ENCODE measurements at regions of chr14 and their contacts with region 1.

Region 1: DNA sequence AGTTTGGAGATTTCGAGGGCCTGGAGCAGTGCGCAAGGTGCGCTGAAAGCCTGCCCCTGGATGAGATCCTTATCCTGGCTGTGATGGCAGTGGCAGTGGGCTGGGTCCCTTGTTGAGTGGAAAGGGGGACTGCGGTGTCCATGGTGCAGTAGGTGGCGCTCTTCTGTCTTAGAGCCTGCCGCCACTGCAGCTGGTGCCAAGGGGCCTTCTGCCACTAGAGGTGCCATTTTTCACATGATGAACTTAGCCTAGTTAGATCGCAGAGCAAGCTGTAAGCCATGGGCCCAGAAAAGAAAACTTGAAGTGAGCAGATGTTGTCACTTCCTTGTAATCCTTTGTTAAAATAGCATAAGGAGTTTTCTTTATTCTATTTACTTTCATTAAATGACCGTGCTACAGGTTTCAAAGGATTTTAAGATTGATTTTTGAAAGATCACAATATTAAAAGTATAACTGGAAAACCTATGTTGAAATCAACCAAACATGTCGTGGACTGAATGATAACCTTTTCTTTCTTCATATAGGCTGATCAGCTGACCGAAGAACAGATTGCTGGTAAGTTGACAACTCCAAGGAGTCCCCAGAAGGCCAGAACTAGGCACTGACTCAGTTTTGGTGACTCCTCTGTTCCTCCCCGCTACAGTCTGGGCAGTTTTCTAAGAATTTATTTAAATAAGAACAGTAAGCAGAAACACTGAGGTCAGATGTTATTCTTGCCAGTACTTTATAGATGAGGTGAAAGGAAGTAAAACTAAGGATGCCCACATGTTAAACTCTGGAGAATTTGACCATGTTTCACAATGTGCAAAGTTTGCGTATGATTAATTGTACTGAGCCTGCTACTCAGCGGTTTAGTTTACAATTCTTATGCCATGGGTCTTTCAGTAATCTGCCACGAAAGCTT is 3.0 kb downstream of the CALM1 start:
- DNase-seq: peak; percentile 92
- ATAC-seq: peak; percentile 39
- H3K4me3 ChIP-seq: peak overlapping the region in 1 of 5 experiments; percentile 85
- H3K4me3 Mint-ChIP-seq: peak overlapping the region; percentile 96
- H3K27ac ChIP-seq: peak overlapping the region; percentile 93 to 95
- H3K27ac Mint-ChIP-seq: peak overlapping the region; percentile 98
- H3K4me1 ChIP-seq: peaks cover 39 to 45% of the 10 kb centered on the region in 2 donors
- H3K4me1 Mint-ChIP-seq: peaks cover 46% of the 10 kb centered on the region
- H3K27me3 ChIP-seq: no peaks in the 10 kb centered on the region
- H3K27me3 Mint-ChIP-seq: no peaks in the 10 kb centered on the region
- CTCF ChIP-seq: peak; percentile 100

Region 2: DNA sequence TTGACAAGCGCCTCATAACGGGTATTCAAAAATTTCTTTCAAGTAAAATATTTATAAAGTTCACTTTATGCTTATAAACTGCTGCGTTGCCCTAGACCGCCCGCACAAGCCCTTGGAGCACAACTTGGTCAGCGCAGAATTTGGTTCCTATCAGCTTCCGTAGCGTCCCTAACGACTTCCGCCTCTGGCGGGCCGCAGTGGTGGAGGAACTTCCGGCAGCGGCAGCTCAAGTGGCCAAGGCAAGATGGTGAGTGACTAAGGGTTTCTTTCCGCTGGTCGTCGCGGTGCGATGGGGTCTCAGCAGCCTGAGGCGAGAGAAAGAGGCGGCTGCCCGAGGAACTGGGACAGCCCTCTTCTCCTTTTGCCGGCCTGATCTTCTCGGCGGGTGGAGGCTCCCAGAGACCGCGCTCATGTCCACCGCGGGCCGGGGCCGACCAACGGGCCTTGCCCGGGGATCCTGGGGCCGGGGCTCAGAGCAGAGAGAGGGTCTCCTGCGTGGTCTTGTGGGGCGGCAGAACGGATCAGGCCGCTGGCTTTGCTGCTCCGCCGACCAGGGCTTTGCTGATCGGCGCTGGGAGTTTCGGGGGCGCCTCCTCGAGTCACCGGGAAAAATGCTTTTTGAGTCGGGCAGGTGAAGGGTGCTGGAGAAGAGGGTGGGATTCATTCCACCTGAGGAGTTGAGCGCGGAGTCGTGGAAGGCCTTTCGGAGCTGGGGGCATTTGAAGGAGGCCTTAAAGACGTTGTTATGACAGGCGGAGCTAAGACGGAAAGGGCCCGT is 143.2 kb before region 1 on chr14 and contains the start of gene PSMC1:
- CTCF ChIA-PET with region 1: interaction called, 6 read pairs
- POLR2A ChIA-PET with region 1: interaction called, 3 read pairs
- intact Hi-C with region 1: loop called (anchors 1 kb)
- DNase-seq: peak; percentile 89
- ATAC-seq: peak; percentile 94
- H3K4me3 ChIP-seq: peak within 1 kb of the TSS; percentile 75 to 92 (median 81)
- H3K4me3 Mint-ChIP-seq: peak within 1 kb of the TSS; percentile 99
- H3K27ac ChIP-seq: peak within 1 kb of the TSS; percentile 34 to 82
- H3K27ac Mint-ChIP-seq: peak within 1 kb of the TSS; percentile 97
- H3K4me1 ChIP-seq: peaks cover 14 to 25% of the 10 kb centered on the region in 2 donors
- H3K4me1 Mint-ChIP-seq: peaks cover 38% of the 10 kb centered on the region
- H3K27me3 ChIP-seq: peaks cover 0 to 5% (median 2%) of the 10 kb centered on the region in 4 experiments
- H3K27me3 Mint-ChIP-seq: peaks cover 3% of the 10 kb centered on the region
- CTCF ChIP-seq: no peak
- total RNA-seq, gene PSMC1: 50.2 and 51.6 TPM in 2 replicates

Region 3: DNA sequence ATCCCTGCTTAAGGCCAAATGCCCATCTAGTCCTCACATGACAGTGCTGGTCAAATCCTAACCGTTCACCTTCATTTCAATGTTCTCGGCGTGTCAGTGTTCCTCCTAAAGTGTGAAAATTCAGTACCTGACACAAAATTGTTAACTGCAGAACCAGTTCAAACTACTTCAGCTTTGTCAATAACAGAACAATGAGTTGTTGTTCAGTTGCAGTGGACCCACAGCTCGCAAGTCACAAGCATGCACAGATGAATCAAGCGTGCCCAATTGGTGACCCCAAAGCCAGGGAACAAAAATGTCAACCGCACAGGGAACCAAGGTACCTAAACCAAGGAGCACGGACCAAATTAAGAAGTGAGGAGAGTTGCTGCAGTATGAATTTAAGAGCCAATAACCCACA is 91.2 kb before region 1 on chr14:
- CTCF ChIA-PET with region 1: no interaction called
- POLR2A ChIA-PET with region 1: no interaction called
- intact Hi-C with region 1: no loop called
- DNase-seq: no peak
- ATAC-seq: no peak
- H3K4me3 ChIP-seq: no peak overlapping the region
- H3K4me3 Mint-ChIP-seq: no peak overlapping the region
- H3K27ac ChIP-seq: no peak overlapping the region
- H3K27ac Mint-ChIP-seq: no peak overlapping the region
- H3K4me1 ChIP-seq: no peaks in the 10 kb centered on the region
- H3K4me1 Mint-ChIP-seq: no peaks in the 10 kb centered on the region
- H3K27me3 ChIP-seq: no peaks in the 10 kb centered on the region
- H3K27me3 Mint-ChIP-seq: no peaks in the 10 kb centered on the region
- CTCF ChIP-seq: no peak

Region 4: GRCh38 chr14:90383075-90383730 is 16.6 kb before region 1 on chr14:
- CTCF ChIA-PET with region 1: interaction called, 36 read pairs
- POLR2A ChIA-PET with region 1: interaction called, 117 read pairs
- intact Hi-C with region 1: loop called (anchors 1 kb)
- DNase-seq: peak; percentile 99
- ATAC-seq: peak; percentile 91
- H3K4me3 ChIP-seq: peak overlapping the region; percentile 60 to 97 (median 92)
- H3K4me3 Mint-ChIP-seq: no peak overlapping the region
- H3K27ac ChIP-seq: peak overlapping the region; percentile 93 to 98
- H3K27ac Mint-ChIP-seq: no peak overlapping the region
- H3K4me1 ChIP-seq: peaks cover 15 to 24% of the 10 kb centered on the region in 2 donors
- H3K4me1 Mint-ChIP-seq: peaks cover 12% of the 10 kb centered on the region
- H3K27me3 ChIP-seq: no peaks in the 10 kb centered on the region
- H3K27me3 Mint-ChIP-seq: no peaks in the 10 kb centered on the region
- CTCF ChIP-seq: no peak

Region 5: DNA sequence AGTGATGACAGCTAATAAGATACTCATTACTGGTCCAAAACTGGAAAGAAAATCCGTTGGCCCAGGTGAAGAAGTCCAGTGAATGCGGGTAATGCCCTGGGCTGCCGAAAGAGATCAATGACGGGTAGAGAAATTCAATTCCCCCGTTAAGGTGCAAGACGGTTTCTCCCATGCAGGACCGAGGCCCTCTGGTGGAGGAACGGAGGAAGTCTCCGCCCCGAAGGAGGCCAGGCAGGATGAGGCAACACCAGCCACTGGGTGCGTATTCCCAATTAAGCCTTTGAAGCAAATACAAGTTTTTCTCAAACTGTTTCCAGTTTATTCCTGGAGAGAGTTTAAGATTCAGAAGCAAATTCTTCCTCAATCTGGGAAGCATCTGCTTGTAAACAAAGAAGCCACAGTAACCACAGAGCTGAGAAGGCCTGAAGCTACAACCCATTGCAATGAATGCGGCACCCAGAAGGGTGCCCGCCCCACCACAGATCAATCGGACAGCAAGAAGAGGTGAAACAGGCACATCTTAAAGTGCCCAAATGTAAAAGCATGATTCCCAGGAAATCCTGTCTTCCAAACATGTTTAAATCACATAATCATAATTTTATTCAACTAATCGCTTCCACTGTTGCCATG is 297.9 kb after region 1 on chr14:
- CTCF ChIA-PET with region 1: interaction called, 13 read pairs
- POLR2A ChIA-PET with region 1: no interaction called
- intact Hi-C with region 1: loop called (anchors 1 kb)
- DNase-seq: peak; percentile 71
- ATAC-seq: peak; percentile 70
- H3K4me3 ChIP-seq: peak overlapping the region in 1 of 5 experiments; percentile 34
- H3K4me3 Mint-ChIP-seq: no peak overlapping the region
- H3K27ac ChIP-seq: no peak overlapping the region
- H3K27ac Mint-ChIP-seq: no peak overlapping the region
- H3K4me1 ChIP-seq: peaks cover 0 to 5% of the 10 kb centered on the region in 2 donors
- H3K4me1 Mint-ChIP-seq: peaks cover 5% of the 10 kb centered on the region
- H3K27me3 ChIP-seq: no peaks in the 10 kb centered on the region
- H3K27me3 Mint-ChIP-seq: no peaks in the 10 kb centered on the region
- CTCF ChIP-seq: peak; percentile 86

Region 6: DNA sequence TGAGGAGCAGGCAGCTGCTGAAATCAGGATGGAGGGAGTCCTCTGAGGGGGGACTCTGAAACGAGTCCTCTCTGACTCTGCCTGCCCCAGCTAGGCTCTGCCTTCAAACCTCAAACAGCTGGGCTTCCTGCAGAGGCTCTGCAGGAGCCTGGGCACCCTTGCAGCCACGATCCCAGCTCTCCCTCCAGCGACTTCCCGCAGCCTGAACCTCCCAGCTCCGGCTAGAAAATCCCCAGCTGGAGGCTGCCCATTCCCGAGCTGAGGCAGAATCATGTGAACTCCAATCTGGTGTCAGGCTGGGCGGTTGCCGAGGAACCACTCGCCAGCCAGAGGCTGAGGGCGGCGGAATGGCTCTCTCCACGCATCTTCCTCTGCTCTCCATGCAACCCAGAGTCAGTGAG is 844.7 kb after region 1 on chr14 and contains the start of gene GPR68:
- CTCF ChIA-PET with region 1: no interaction called
- POLR2A ChIA-PET with region 1: no interaction called
- intact Hi-C with region 1: loop called (anchors 5 kb)
- DNase-seq: no peak
- ATAC-seq: no peak
- H3K4me3 ChIP-seq: peak within 1 kb of the TSS in 2 of 5 experiments; percentile 30 to 37
- H3K4me3 Mint-ChIP-seq: peak within 1 kb of the TSS; percentile 75
- H3K27ac ChIP-seq: peak within 1 kb of the TSS; percentile 57 to 79
- H3K27ac Mint-ChIP-seq: peak within 1 kb of the TSS; percentile 91
- H3K4me1 ChIP-seq: peaks cover 46 to 55% of the 10 kb centered on the region in 2 donors
- H3K4me1 Mint-ChIP-seq: peaks cover 62% of the 10 kb centered on the region
- H3K27me3 ChIP-seq: no peaks in the 10 kb centered on the region
- H3K27me3 Mint-ChIP-seq: no peaks in the 10 kb centered on the region
- CTCF ChIP-seq: no peak
- total RNA-seq, gene GPR68: 0.34 and 0.53 TPM in 2 replicates